ENCODE measurements at regions of chr1 and their contacts with region 1.

Region 1: GRCh38 chr1:23539698-23540266 is 8.7 kb upstream of the E2F2 start:
- DNase-seq: peak; percentile 94
- ATAC-seq: peak; percentile 89
- H3K4me3 ChIP-seq: peak overlapping the region; percentile 24 to 42
- H3K27ac ChIP-seq: no peak overlapping the region
- H3K4me1 ChIP-seq: peaks cover 5 to 32% of the 10 kb centered on the region in 2 experiments
- H3K27me3 ChIP-seq: no peaks in the 10 kb centered on the region
- CTCF ChIP-seq: peak; percentile 97 to 98 (median 97)
- POLR2A ChIP-seq: no peak
- RAD21 ChIP-seq: peak; percentile 99

Region 2: GRCh38 chr1:22976461-22977243 is 563.1 kb before region 1 on chr1:
- CTCF ChIA-PET with region 1: interaction called, 8 read pairs
- POLR2A ChIA-PET with region 1: no interaction called
- RAD21 ChIA-PET with region 1: interaction called in 1 of 2 experiments, 3 read pairs
- intact Hi-C with region 1: loop called (anchors 2 kb)
- DNase-seq: peak; percentile 78
- ATAC-seq: peak; percentile 98
- H3K4me3 ChIP-seq: 0 out of 4 replicates have a peak overlapping the region, but pooled peaks of 1 of the 2 experiments have one; percentile 2
- H3K27ac ChIP-seq: no peak overlapping the region
- H3K4me1 ChIP-seq: peaks cover 4 to 22% of the 10 kb centered on the region in 2 experiments; a peak in 2 of 4 replicates
- H3K27me3 ChIP-seq: no peaks in the 10 kb centered on the region
- CTCF ChIP-seq: peak; percentile 90 to 98 (median 95)
- POLR2A ChIP-seq: no peak
- RAD21 ChIP-seq: peak; percentile 96

Region 3: DNA sequence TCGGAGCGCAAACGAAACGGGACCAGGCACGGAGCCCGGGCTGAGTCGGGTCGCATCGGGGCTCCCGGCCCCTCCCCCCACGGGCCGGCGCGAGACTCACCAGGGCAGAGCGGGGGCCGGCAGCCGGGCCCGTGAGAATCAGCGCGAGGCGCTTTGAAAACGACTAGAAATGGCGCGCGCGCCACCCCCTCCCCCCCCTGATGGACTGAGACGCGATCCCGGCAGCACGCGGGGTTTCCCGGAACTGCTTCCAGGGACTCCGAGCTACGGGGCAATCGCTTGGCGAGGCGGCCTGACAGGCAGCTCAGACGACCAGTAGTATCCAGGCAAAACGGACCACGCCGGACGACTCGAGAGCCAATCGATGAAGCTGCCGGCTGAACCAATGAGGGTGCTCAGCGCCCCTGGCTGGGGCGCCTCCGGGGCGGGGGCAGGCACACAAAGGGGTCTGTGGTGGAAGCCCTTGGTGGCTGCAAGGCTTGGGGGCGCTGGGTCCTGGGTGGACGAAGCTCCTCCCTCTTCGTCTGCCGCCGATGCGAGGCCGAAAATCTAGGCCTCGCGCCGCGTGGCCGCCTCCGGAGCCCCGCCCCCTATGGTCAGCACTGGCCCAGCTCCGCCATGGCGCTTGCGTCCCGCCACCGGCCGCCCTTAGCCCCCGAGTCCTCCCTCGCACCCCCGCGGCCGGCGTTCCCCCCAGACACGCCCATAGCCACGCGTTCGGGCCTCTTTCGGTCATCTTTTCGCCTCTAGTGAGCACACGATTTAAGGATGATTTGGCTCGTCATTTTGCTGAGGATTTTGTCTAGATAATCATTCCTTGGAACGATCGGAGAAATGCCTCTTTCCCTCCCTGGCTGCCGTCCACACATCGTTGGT is 195.4 kb before region 1 on chr1 and contains the start of gene HNRNPR:
- CTCF ChIA-PET with region 1: no interaction called
- POLR2A ChIA-PET with region 1: interaction called, 3 read pairs
- RAD21 ChIA-PET with region 1: no interaction called
- intact Hi-C with region 1: loop called (anchors 10 kb)
- DNase-seq: peak; percentile 100
- ATAC-seq: peak; percentile 96
- H3K4me3 ChIP-seq: peak within 1 kb of the TSS; percentile 71 to 76
- H3K27ac ChIP-seq: peak within 1 kb of the TSS; percentile 85
- H3K4me1 ChIP-seq: peaks cover 11 to 37% of the 10 kb centered on the region in 2 experiments
- H3K27me3 ChIP-seq: no peaks in the 10 kb centered on the region
- CTCF ChIP-seq: no peak
- POLR2A ChIP-seq: peak; percentile 63
- RAD21 ChIP-seq: no peak
- total RNA-seq, gene HNRNPR: 194 TPM

Region 4: GRCh38 chr1:23634842-23635651 is 95.3 kb after region 1 on chr1:
- CTCF ChIA-PET with region 1: interaction called, 104 read pairs
- POLR2A ChIA-PET with region 1: interaction called, 4 read pairs
- RAD21 ChIA-PET with region 1: interaction called, 23 to 25 read pairs
- intact Hi-C with region 1: loop called (anchors 1 kb)
- DNase-seq: peak; percentile 56
- ATAC-seq: peak; percentile 74
- H3K4me3 ChIP-seq: peak overlapping the region; percentile 54 to 81
- H3K27ac ChIP-seq: peak overlapping the region; percentile 19; the same call in 1 of the 2 replicates
- H3K4me1 ChIP-seq: peaks cover 13 to 25% of the 10 kb centered on the region in 2 experiments
- H3K27me3 ChIP-seq: no peaks in the 10 kb centered on the region
- CTCF ChIP-seq: peak; percentile 55 to 90 (median 82); a peak in 5 of 6 replicates
- POLR2A ChIP-seq: no peak
- RAD21 ChIP-seq: peak; percentile 77

Region 5: GRCh38 chr1:23751050-23751814 is 211.4 kb after region 1 on chr1:
- CTCF ChIA-PET with region 1: no interaction called
- POLR2A ChIA-PET with region 1: no interaction called
- RAD21 ChIA-PET with region 1: no interaction called
- intact Hi-C with region 1: loop called (anchors 5 kb)
- DNase-seq: peak; percentile 21
- ATAC-seq: peak; percentile 93
- H3K4me3 ChIP-seq: no peak overlapping the region
- H3K27ac ChIP-seq: no peak overlapping the region
- H3K4me1 ChIP-seq: peaks cover 0 to 10% of the 10 kb centered on the region in 2 experiments; a peak in 1 of 4 replicates
- H3K27me3 ChIP-seq: no peaks in the 10 kb centered on the region
- CTCF ChIP-seq: peak; percentile 51 to 85 (median 81); a peak in 5 of 6 replicates
- POLR2A ChIP-seq: no peak
- RAD21 ChIP-seq: peak; percentile 75

Measured in HCT116 (cell line).